ENCODE measurements at regions of chr9 and their contacts with region 1.

Region 1: GRCh38 chr9:131739980-131740648 is at the start of gene RAPGEF1:
- DNase-seq: peak in 8 of 10 donors; percentile 34 to 81 (median 58)
- H3K4me3 ChIP-seq: peak within 1 kb of the TSS; percentile 51 to 84 (median 72)
- H3K27ac ChIP-seq: peak within 1 kb of the TSS in 54 of 59 donors; percentile 3 to 93 (median 79)
- H3K27me3 ChIP-seq: no peaks in the 10 kb centered on the region
- CTCF ChIP-seq: peak; percentile 54 to 97 (median 83)
- total RNA-seq, gene RAPGEF1: 96.5 to 222 (median 138) TPM

Region 2: DNA sequence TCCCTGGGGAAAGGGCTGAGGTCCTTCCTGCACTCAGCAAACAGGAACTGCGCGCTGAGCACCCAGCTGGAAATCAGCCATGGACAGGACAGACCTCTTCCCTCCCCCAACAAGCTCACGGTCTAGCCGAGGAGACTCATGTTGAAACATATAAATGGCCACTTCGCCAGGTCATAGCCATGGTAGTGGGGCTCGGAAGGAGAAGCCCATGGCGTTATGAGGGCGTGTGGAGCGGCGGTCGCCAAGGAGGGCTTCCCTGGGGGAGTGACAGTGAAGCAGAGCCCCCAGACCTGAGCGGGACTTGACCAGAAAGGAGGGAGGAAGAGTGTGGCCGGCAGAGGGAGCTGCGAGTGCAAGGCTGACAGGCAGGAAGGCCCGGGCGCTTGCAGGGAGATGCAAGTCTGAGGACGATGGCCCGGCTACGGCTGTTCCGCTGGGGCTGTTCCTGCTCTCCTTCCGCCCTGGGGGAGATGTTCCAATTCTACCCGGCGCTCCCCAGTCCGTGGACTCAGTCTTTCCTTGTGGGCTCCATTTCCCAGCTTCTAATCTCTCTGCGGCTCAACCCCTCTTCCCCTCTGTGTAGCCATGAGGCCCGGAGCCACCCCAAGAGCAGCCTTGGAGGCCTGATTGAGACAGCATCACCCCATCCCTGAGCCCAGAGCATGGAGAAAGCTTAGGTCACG is 390.1 kb before region 1 on chr9:
- intact Hi-C with region 1: loop called (anchors 2 to 10 kb)
- DNase-seq: peak; percentile 83 to 91 (median 87)
- H3K4me3 ChIP-seq: peak overlapping the region in 51 of 59 donors; percentile 0 to 60 (median 39)
- H3K27ac ChIP-seq: peak overlapping the region in 13 of 59 donors; percentile 8 to 71 (median 42)
- H3K27me3 ChIP-seq: no peaks in the 10 kb centered on the region
- CTCF ChIP-seq: peak; percentile 52 to 93 (median 86)

Region 3: DNA sequence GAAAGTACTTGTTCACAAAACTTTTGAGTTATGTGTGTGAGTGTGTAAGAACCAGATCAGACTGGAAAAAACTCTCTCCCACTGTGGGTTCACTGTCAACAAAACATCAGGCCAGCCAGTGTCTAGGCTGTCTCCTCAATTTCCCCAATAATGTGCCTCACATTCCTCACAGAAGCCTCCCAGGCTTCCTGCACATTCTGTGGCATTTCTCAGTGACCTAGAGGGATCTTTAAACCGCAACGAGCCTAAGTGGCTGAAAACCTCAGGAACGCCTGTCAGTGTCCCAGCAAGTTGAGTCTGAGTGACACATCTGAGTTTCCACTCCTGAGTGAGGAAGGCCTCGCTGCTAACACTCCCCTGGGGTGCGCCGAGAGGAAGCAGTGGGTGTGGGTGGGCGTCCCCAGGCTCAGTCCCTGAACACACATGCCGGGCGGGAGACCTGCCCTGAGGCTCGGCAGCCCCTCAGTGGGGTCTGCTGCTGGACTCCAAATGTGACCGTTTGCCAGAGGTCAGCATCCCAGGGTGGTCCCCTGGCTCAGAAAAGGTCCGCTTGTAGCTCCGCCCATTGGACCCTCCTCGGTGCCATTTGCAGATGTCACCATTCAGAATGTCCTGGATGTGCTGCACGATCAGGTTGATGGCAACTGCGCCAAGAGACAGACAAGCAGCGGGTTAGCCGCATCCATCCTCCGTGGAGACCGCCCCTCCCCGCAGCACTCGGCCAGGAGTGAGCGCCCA is 215.4 kb before region 1 on chr9:
- intact Hi-C with region 1: loop called in 1 of 2 experiments (anchors 10 kb)
- DNase-seq: no peak
- H3K4me3 ChIP-seq: no peak overlapping the region
- H3K27ac ChIP-seq: peak overlapping the region in 31 of 59 donors; percentile 1 to 88 (median 64)
- H3K27me3 ChIP-seq: no peaks in the 10 kb centered on the region
- CTCF ChIP-seq: no peak

Region 4: DNA sequence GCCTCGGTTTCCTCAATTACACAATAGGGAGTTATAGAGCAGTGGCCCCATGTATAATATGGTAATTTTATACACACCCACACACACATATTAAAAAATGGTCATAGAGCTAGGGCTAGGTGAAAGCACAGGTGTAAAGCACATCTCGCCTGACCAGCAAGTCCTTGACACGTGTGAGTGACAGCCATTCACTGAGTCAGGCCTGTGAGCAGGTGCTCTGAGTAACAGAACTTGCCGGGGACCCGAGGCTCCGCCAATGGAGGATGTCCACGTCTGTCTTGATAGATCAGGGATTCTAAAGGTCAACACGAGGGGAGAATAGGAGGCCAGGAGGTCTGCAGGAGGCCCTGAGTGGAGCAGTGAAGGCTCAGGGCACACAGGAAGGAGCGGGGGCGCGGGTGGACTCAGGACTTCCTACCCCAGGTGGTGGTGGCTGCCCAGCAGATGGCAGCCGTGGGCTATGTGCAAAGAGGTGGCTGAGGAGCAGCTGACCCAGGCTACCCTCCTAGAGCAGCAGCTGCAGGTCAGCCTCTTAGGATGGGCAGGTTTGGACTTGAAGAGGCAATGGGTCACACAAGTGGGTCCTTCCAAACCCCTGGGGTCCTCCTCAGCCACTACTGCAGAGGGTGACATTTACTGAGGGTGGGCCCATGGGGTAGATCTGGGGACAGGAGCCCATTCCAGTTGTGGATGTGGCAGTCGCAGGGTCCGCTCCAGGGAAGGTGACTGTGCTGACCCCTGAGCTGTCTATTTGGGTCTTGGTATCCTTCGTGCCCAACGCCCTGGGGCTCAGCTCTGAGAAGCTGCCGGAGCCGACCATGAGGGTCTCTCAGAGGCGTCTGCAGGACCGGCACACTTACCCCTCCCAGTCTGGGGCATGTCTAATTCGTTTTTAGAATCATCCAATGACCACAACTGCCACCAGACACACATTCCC is 148.9 kb before region 1 on chr9:
- intact Hi-C with region 1: loop called (anchors 1 to 2 kb)
- DNase-seq: peak; percentile 65 to 85 (median 76)
- H3K4me3 ChIP-seq: no peak overlapping the region
- H3K27ac ChIP-seq: peak overlapping the region in 7 of 59 donors; percentile 4 to 52 (median 25)
- H3K27me3 ChIP-seq: no peaks in the 10 kb centered on the region
- CTCF ChIP-seq: peak; percentile 50 to 95 (median 87)

Region 5: GRCh38 chr9:131656356-131657036 is 83.6 kb before region 1 on chr9:
- intact Hi-C with region 1: loop called (anchors 5 to 10 kb)
- DNase-seq: peak in 7 of 10 donors; percentile 47 to 75 (median 58)
- H3K4me3 ChIP-seq: no peak overlapping the region
- H3K27ac ChIP-seq: peak overlapping the region in 49 of 59 donors; percentile 2 to 79 (median 58)
- H3K27me3 ChIP-seq: no peaks in the 10 kb centered on the region
- CTCF ChIP-seq: no peak

Region 6: DNA sequence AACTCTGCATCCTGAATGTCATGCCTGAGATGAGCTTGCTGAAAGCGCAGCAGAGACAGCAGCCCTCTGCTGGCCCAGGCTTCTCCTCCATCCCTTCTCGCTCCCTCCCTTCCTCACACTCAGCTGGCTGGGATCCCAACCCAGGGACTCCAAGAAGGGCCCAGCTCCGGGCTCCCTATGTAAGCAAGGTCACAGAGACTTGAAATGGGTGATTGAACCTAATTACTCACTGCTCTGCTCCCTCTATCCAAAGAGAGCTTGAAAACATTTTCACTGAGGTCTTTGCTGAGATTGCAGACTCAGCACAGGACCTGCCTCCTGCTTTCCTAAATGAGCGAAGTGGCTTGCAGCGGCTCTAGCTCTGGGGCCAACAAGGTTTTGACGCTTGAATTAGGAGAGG is 43.0 kb before region 1 on chr9:
- intact Hi-C with region 1: no loop called
- DNase-seq: peak in 5 of 10 donors; percentile 39 to 81 (median 45)
- H3K4me3 ChIP-seq: no peak overlapping the region
- H3K27ac ChIP-seq: peak overlapping the region in 51 of 59 donors; percentile 5 to 90 (median 71)
- H3K27me3 ChIP-seq: no peaks in the 10 kb centered on the region
- CTCF ChIP-seq: peak in 21 of 56 donors; percentile 10 to 34 (median 21)